CD4-positive, alpha-beta memory T cell (primary cell): ENCODE measurements at regions of chr13 and their contacts with region 1.

Region 1: DNA sequence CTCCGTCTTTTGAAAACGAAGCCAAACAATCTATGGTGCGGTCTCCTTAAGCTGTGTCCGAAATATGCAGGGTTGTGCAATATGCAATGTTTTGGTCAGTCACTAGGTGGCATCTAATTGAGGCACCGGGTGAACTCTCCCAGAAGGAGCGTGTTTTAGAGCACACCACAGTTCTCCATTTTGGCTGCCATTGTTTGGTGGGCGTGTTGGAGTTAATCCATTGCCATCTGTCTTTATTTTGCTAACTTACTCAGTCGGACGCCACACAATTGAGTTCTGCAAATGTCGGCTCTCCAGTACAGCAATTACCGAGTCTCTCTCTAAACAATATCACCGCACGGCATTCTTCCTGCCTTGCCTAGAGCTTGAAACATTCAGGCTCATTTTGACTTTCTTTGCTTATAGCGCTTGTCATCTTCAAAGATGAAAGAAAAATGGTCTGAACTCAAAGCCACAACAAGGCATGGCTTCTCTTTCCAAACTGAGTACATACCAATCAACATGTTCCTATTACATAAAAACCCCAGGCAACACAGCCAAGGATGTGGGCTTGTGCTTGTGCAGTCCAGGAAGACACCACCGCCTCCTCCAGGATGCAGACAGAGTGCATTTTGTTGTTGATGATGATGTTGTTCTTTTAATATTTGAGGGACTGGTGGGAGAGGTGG is 182.0 kb upstream of the SERP2 start:
- DNase-seq: peak; percentile 55 to 69 (median 63)
- H3K4me3 ChIP-seq: peak overlapping the region in 1 of 2 donors; percentile 25
- H3K4me3 Mint-ChIP-seq: peak overlapping the region; percentile 4 to 68 (median 61)
- H3K27ac ChIP-seq: no peak overlapping the region
- H3K27ac Mint-ChIP-seq: peak overlapping the region; percentile 73 to 90 (median 78)
- H3K4me1 ChIP-seq: peaks cover 12% of the 10 kb centered on the region
- H3K4me1 Mint-ChIP-seq: peaks cover 18 to 30% (median 25%) of the 10 kb centered on the region in 4 donors
- H3K27me3 ChIP-seq: no peaks in the 10 kb centered on the region
- H3K27me3 Mint-ChIP-seq: peaks cover 0 to 2% of the 10 kb centered on the region in 2 donors

Region 2: DNA sequence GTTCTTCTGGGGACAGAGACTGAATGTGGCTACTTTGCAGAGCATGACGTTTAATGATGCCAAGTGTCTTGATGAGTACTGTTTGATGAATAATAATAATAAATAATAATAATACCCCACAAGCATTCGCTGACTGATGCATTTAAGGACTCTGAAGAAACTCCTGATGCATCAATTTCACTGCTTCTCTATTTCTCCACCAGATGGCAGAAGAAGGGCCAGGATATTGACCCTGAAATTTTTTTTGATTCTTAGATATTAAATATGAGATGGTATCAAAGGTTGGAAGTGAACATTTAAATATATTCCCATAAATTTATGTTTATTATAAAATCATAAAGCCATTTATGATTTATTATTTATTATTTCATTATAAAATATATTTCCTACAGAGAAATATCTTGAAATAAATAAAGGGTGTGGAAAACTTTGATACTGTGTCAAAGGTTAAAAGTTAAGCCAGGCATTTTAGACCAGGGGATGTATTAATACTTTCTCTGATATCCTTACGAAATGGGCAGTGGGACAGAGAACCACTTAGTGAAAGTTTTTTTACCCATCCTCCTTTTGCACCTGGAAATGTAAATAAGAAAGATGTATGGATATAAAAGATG is 141.1 kb before region 1 on chr13:
- CTCF ChIA-PET with region 1: no interaction called
- POLR2A ChIA-PET with region 1: no interaction called
- intact Hi-C with region 1: loop called (anchors 1 kb)
- DNase-seq: peak in 4 of 5 donors; percentile 21 to 36 (median 32)
- H3K4me3 ChIP-seq: no peak overlapping the region
- H3K4me3 Mint-ChIP-seq: no peak overlapping the region
- H3K27ac ChIP-seq: no peak overlapping the region
- H3K27ac Mint-ChIP-seq: no peak overlapping the region
- H3K4me1 ChIP-seq: no peaks in the 10 kb centered on the region
- H3K4me1 Mint-ChIP-seq: peaks cover 0 to 4% (median 3%) of the 10 kb centered on the region in 4 donors
- H3K27me3 ChIP-seq: peaks cover 5% of the 10 kb centered on the region
- H3K27me3 Mint-ChIP-seq: peaks cover 20 to 36% of the 10 kb centered on the region in 2 donors

Region 3: GRCh38 chr13:44141725-44142539 is 49.7 kb before region 1 on chr13:
- CTCF ChIA-PET with region 1: interaction called, 8 read pairs
- POLR2A ChIA-PET with region 1: interaction called, 5 read pairs
- intact Hi-C with region 1: loop called (anchors 2 kb)
- DNase-seq: peak; percentile 87 to 94 (median 89)
- H3K4me3 ChIP-seq: peak overlapping the region; percentile 59 to 79
- H3K4me3 Mint-ChIP-seq: peak overlapping the region; percentile 90 to 98 (median 94)
- H3K27ac ChIP-seq: peak overlapping the region; percentile 83
- H3K27ac Mint-ChIP-seq: peak overlapping the region; percentile 76 to 97 (median 96)
- H3K4me1 ChIP-seq: peaks cover 14% of the 10 kb centered on the region
- H3K4me1 Mint-ChIP-seq: peaks cover 9 to 16% (median 13%) of the 10 kb centered on the region in 4 donors
- H3K27me3 ChIP-seq: no peaks in the 10 kb centered on the region
- H3K27me3 Mint-ChIP-seq: peaks cover 5 to 7% of the 10 kb centered on the region in 2 donors

Region 4: DNA sequence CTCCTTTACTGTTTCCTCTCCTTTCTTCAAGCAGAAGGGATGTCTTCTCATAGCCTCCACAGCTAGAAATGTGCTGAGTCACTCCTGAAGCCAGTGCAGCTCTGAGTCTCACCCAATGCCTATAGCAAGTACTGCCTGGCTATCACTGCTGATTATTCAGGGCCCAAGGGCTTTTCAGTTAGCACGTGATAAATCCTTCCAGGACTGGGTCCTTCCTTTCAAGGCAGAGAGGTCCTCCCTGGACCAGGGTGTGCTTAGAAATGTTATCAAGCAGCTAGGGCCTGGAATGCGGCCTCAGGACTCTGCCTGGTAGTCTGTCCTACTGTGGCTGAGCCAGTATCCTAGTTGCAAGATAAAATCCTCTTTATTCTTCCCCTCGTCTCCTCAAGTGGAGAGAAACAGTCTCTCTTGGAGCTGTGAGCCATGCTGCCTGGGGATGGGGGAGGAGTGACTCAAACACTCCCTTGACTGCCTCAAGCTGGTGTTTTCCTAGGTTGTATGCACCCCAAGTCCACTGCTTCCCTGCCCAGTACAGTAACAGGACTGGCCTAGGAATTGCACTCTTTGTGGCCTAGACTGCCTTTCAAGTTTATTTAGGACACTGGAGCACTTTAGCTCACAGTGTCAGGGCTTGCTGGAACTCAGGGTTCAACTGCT is 16.7 kb before region 1 on chr13:
- CTCF ChIA-PET with region 1: no interaction called
- POLR2A ChIA-PET with region 1: no interaction called
- intact Hi-C with region 1: no loop called
- DNase-seq: no peak
- H3K4me3 ChIP-seq: no peak overlapping the region
- H3K4me3 Mint-ChIP-seq: no peak overlapping the region
- H3K27ac ChIP-seq: no peak overlapping the region
- H3K27ac Mint-ChIP-seq: no peak overlapping the region
- H3K4me1 ChIP-seq: no peaks in the 10 kb centered on the region
- H3K4me1 Mint-ChIP-seq: no peaks in the 10 kb centered on the region
- H3K27me3 ChIP-seq: no peaks in the 10 kb centered on the region
- H3K27me3 Mint-ChIP-seq: peaks cover 2 to 5% of the 10 kb centered on the region in 2 donors

Region 5: DNA sequence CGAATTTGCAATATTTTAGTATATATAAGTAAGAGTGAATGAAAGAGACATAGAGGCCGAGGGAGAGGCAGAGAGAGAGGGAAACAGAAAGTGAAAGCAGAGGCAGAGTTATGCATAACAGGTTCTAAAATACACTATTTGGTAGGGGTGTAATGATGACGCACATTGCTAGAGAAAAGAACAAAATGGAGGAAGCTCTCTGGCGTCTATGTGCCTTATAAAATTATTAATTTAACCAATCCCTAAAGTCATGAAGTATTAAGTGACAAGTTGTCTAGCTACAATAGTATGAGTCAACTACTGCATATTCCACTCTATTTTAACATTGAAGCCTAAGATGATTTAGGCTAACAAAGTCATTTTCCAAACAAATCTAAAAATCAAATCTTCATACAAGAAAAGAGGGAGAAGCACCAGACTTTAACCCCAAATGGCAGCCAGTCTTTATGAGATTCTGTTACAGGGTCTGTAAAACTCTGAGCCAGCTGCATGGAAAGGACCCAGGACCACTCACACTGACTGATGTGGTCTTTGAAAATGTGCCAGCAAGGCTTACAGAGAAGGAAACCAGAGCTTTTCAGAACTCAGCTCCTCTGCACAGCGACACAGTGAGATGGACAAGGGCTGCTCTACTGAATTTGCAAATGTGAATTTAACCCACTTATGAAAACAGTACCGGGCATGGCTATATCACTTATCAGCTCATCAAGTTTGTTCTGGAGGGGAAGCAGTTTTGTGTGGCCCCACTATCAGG is 83.0 kb after region 1 on chr13:
- CTCF ChIA-PET with region 1: interaction called, 6 read pairs
- POLR2A ChIA-PET with region 1: interaction called, 11 read pairs
- intact Hi-C with region 1: loop called (anchors 5 kb)
- DNase-seq: peak; percentile 73 to 83 (median 78)
- H3K4me3 ChIP-seq: peak overlapping the region; percentile 48
- H3K4me3 Mint-ChIP-seq: peak overlapping the region; percentile 61 to 89 (median 77)
- H3K27ac ChIP-seq: peak overlapping the region; percentile 45
- H3K27ac Mint-ChIP-seq: peak overlapping the region; percentile 80 to 98 (median 94)
- H3K4me1 ChIP-seq: peaks cover 24% of the 10 kb centered on the region
- H3K4me1 Mint-ChIP-seq: peaks cover 24 to 40% (median 27%) of the 10 kb centered on the region in 4 donors
- H3K27me3 ChIP-seq: no peaks in the 10 kb centered on the region
- H3K27me3 Mint-ChIP-seq: peaks cover 5 to 6% of the 10 kb centered on the region in 2 donors

Region 6: GRCh38 chr13:44396701-44397580 is 205.3 kb after region 1 on chr13:
- CTCF ChIA-PET with region 1: no interaction called
- POLR2A ChIA-PET with region 1: no interaction called
- intact Hi-C with region 1: no loop called
- DNase-seq: no peak
- H3K4me3 ChIP-seq: no peak overlapping the region
- H3K4me3 Mint-ChIP-seq: no peak overlapping the region
- H3K27ac ChIP-seq: no peak overlapping the region
- H3K27ac Mint-ChIP-seq: no peak overlapping the region
- H3K4me1 ChIP-seq: no peaks in the 10 kb centered on the region
- H3K4me1 Mint-ChIP-seq: no peaks in the 10 kb centered on the region
- H3K27me3 ChIP-seq: no peaks in the 10 kb centered on the region
- H3K27me3 Mint-ChIP-seq: peaks cover 0 to 5% of the 10 kb centered on the region in 2 donors

Region 7: GRCh38 chr13:44470638-44471562 is 279.3 kb after region 1 on chr13:
- CTCF ChIA-PET with region 1: interaction called, 5 read pairs
- POLR2A ChIA-PET with region 1: no interaction called
- intact Hi-C with region 1: loop called (anchors 1 kb)
- DNase-seq: peak in 2 of 5 donors; percentile 16 to 20
- H3K4me3 ChIP-seq: no peak overlapping the region
- H3K4me3 Mint-ChIP-seq: no peak overlapping the region
- H3K27ac ChIP-seq: no peak overlapping the region
- H3K27ac Mint-ChIP-seq: no peak overlapping the region
- H3K4me1 ChIP-seq: no peaks in the 10 kb centered on the region
- H3K4me1 Mint-ChIP-seq: peaks cover 0 to 4% (median 0%) of the 10 kb centered on the region in 4 donors
- H3K27me3 ChIP-seq: no peaks in the 10 kb centered on the region
- H3K27me3 Mint-ChIP-seq: no peaks in the 10 kb centered on the region